Activated B cell treated with CpG ODN at 0.5 μM for 24 hours (primary cell): ENCODE measurements at regions of chr19 and their contacts with region 1.

Region 1: GRCh38 chr19:12681074-12681951 is at the start of gene DHPS:
- DNase-seq: peak; percentile 71
- ATAC-seq: peak; percentile 78
- H3K4me3 Mint-ChIP-seq: peak within 1 kb of the TSS; percentile 94
- H3K27ac Mint-ChIP-seq: peak within 1 kb of the TSS; percentile 95
- H3K4me1 Mint-ChIP-seq: peaks cover 24% of the 10 kb centered on the region
- H3K27me3 Mint-ChIP-seq: no peaks in the 10 kb centered on the region
- CTCF ChIP-seq: no peak
- total RNA-seq, gene DHPS: 141 and 160 TPM in 2 replicates

Region 2: GRCh38 chr19:12202250-12202649 is 479.1 kb before region 1 on chr19:
- CTCF ChIA-PET with region 1: no interaction called
- POLR2A ChIA-PET with region 1: no interaction called
- intact Hi-C with region 1: loop called (anchors 5 kb)
- DNase-seq: peak; percentile 33
- ATAC-seq: peak; percentile 71
- H3K4me3 Mint-ChIP-seq: no peak overlapping the region
- H3K27ac Mint-ChIP-seq: no peak overlapping the region
- H3K4me1 Mint-ChIP-seq: peaks cover 6% of the 10 kb centered on the region
- H3K27me3 Mint-ChIP-seq: no peaks in the 10 kb centered on the region
- CTCF ChIP-seq: no peak

Region 3: DNA sequence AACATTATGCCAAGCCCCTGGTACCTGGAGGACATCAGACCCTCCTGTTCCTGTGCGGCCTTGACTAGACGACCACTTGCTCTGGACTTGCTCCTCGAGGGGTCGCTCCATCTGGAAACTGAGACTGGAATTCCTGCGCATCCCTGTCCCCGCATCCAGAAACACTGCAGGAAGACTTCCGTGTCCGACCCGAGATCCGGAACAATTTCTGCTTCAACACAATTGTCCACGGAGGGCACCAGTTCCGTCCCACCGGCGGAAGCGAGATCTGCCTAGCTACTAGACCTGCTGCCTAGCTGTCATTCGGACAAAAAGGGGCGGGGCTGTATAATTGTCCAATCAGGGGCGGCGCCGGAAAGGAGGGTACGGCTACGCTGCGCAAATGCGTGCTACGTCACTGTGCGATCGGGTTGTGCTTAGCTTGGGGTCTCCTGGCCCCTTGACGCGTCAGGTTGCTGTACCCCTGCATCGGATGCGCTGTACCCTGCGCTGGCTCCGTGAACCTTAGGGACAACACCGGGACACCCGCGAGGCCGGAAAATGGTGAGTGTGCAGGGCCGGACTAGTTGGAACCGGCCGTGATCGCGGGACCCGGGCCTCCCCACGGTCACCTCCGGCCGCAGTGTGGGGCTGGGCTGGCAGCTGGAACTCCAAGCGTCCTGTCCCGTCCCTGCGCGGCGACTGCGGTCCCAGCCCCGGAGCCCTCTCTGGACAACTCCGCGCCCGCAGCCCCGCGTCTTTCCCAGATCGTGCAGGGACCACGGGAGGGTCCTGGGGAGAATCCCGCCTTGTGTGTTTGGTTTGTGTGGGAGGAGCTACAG is 70.6 kb before region 1 on chr19 and contains the starts of genes ZNF490 and ZNF791:
- CTCF ChIA-PET with region 1: interaction called, 4 read pairs
- POLR2A ChIA-PET with region 1: interaction called, 10 read pairs
- intact Hi-C with region 1: no loop called
- DNase-seq: peak; percentile 89
- ATAC-seq: peak; percentile 80
- H3K4me3 Mint-ChIP-seq: peak within 1 kb of the TSS; percentile 100
- H3K27ac Mint-ChIP-seq: peak within 1 kb of the TSS; percentile 100
- H3K4me1 Mint-ChIP-seq: peaks cover 66% of the 10 kb centered on the region
- H3K27me3 Mint-ChIP-seq: no peaks in the 10 kb centered on the region
- CTCF ChIP-seq: no peak
- total RNA-seq, gene ZNF490: 15.6 TPM in 2 replicates
- total RNA-seq, gene ZNF791: 37.5 and 46.1 TPM in 2 replicates

Region 4: DNA sequence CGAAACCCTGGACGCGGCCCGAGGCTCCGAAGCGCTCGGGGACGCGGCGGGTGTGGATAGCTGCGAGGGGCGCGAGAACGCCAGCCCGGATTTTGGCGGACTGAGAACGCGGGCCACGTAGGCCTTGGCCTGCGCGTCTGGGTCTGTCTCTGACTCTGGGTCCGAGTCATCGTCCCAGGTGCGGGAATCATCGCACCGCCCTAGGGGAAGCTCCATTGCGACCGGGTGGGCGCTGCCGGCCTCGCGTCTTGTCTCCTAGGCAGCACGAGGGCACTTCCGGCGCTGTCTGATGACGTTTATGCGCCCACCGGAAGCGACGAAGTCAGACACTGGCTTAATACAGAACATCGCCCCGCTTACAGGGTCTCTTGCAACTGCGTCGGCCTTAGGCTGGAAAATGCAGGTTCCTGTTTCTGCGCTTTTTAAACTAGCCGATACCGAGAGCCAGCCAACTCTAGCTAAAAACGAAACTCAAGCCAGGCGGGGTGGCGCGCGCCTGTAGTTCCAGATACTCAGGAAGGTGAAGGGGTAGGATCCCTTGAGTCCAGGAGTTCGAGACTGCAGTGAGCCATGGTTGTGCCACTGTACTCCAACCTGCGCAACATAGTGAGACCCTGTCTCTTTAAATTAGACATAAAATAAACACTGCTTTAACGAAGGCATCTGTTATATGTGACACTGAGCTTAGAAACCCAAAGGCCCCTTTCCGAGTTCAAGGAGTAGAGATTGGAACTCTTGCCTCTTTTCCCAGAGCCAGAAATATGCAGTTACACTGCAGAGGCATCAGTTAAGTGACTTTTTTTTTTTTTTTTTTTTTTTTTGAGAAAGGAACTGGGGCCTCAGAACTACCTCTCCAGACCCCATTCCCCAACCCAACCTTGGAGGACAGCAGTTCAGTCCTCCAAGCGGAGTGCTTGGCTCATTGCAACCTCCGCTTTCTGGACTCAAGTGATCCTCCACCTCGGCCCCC is 15.3 kb after region 1 on chr19 and contains the start of gene FBXW9:
- CTCF ChIA-PET with region 1: no interaction called
- POLR2A ChIA-PET with region 1: interaction called, 69 read pairs
- intact Hi-C with region 1: loop called (anchors 1 kb)
- DNase-seq: peak; percentile 98
- ATAC-seq: peak; percentile 88
- H3K4me3 Mint-ChIP-seq: peak within 1 kb of the TSS; percentile 91
- H3K27ac Mint-ChIP-seq: peak within 1 kb of the TSS; percentile 97
- H3K4me1 Mint-ChIP-seq: peaks cover 11% of the 10 kb centered on the region
- H3K27me3 Mint-ChIP-seq: no peaks in the 10 kb centered on the region
- CTCF ChIP-seq: no peak
- total RNA-seq, gene FBXW9: 4.7 and 5.2 TPM in 2 replicates

Region 5: DNA sequence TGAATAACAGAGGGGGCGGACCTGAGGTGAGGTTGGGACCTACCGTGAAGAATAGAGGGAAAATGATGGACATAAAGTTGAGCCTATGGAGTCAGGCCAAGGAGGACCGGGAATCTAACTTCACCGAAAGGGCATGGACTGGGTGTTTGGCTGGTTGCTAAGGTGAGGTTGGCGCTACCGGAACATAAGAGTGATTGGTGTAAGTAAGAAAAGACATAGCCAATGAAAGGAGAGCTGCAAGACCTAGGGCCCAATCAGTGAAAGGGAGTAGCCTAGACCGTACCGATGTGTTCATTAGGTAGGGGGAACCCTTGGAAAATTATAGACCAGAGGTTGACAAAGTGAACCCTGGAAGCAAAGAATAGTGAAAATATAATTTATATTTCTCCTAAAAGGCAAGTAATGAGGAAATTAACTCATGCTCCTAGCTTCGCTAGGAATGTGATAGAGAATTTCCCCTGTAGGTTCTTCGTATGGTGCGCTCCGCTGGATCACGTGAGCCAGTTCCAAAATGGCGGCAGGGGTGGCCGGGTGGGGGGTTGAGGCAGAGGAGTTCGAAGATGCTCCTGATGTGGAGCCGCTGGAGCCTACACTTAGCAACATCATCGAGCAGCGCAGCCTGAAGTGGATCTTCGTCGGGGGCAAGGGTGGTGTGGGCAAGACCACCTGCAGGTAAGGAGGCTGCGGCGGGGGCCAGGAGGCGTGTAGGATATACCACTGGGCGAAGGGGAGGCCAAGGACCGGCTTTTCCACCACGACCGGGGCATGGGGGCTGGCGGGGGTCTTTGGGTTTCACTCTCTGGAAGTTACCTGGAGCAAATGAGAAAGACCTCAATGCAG is 55.9 kb after region 1 on chr19 and contains the start of gene GET3:
- CTCF ChIA-PET with region 1: interaction called, 3 read pairs
- POLR2A ChIA-PET with region 1: interaction called, 19 read pairs
- intact Hi-C with region 1: loop called (anchors 1 kb)
- DNase-seq: peak; percentile 66
- ATAC-seq: peak; percentile 79
- H3K4me3 Mint-ChIP-seq: peak within 1 kb of the TSS; percentile 99
- H3K27ac Mint-ChIP-seq: peak within 1 kb of the TSS; percentile 95
- H3K4me1 Mint-ChIP-seq: peaks cover 40% of the 10 kb centered on the region
- H3K27me3 Mint-ChIP-seq: no peaks in the 10 kb centered on the region
- CTCF ChIP-seq: no peak
- total RNA-seq, gene GET3: 59.6 and 63.5 TPM in 2 replicates

Region 6: GRCh38 chr19:12796146-12797071 is 115.1 kb after region 1 on chr19:
- CTCF ChIA-PET with region 1: interaction called, 5 read pairs
- POLR2A ChIA-PET with region 1: interaction called, 17 read pairs
- intact Hi-C with region 1: loop called (anchors 1 kb)
- DNase-seq: peak; percentile 63
- ATAC-seq: no peak
- H3K4me3 Mint-ChIP-seq: peak overlapping the region; percentile 81
- H3K27ac Mint-ChIP-seq: peak overlapping the region; percentile 80
- H3K4me1 Mint-ChIP-seq: peaks cover 34% of the 10 kb centered on the region
- H3K27me3 Mint-ChIP-seq: no peaks in the 10 kb centered on the region
- CTCF ChIP-seq: peak; percentile 37

Region 7: GRCh38 chr19:12847159-12848139 is 166.1 kb after region 1 on chr19:
- CTCF ChIA-PET with region 1: interaction called, 15 read pairs
- POLR2A ChIA-PET with region 1: no interaction called
- intact Hi-C with region 1: loop called (anchors 1 kb)
- DNase-seq: peak; percentile 92
- ATAC-seq: peak; percentile 99
- H3K4me3 Mint-ChIP-seq: no peak overlapping the region
- H3K27ac Mint-ChIP-seq: no peak overlapping the region
- H3K4me1 Mint-ChIP-seq: peaks cover 7% of the 10 kb centered on the region
- H3K27me3 Mint-ChIP-seq: peaks cover 20% of the 10 kb centered on the region
- CTCF ChIP-seq: peak; percentile 86